Calu3 (cell line): ENCODE measurements at regions of chr1 and their contacts with region 1.

Region 1: DNA sequence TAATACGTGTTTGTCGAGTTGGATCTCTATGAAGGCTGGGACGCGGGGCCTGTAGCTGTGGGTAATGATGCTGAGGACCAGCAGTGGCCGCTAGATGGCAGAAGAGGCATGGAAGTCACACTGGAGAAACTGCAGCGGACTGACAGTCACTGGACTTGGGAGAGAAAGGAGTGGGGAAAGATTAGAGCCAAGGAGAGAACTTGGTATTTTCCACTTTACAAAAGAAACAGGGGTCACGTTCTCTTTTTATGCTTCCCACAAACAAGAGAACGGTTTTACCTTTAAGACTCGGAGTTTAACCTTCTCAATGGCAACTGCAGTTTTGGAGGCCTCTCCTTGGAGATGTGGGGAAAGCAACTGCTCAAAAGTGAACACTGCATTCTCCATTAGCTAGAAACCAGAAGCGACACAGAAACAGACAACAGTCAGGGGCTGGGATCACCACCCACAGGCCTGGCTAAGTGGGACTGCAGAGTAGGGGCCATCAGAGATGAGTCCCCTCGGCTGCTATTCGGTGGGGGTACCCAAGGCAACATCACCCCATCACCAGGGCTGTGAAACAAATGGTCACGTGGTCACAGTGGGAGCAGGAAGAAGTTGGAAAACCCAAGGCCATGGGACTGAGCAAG is 51.1 kb upstream of the EDEM3 start:
- DNase-seq: peak; percentile 90
- H3K4me3 Mint-ChIP-seq: no peak overlapping the region
- H3K27ac Mint-ChIP-seq: no peak overlapping the region
- H3K4me1 Mint-ChIP-seq: peaks cover 9% of the 10 kb centered on the region
- H3K27me3 Mint-ChIP-seq: no peaks in the 10 kb centered on the region
- CTCF ChIP-seq: peak; percentile 88

Region 2: DNA sequence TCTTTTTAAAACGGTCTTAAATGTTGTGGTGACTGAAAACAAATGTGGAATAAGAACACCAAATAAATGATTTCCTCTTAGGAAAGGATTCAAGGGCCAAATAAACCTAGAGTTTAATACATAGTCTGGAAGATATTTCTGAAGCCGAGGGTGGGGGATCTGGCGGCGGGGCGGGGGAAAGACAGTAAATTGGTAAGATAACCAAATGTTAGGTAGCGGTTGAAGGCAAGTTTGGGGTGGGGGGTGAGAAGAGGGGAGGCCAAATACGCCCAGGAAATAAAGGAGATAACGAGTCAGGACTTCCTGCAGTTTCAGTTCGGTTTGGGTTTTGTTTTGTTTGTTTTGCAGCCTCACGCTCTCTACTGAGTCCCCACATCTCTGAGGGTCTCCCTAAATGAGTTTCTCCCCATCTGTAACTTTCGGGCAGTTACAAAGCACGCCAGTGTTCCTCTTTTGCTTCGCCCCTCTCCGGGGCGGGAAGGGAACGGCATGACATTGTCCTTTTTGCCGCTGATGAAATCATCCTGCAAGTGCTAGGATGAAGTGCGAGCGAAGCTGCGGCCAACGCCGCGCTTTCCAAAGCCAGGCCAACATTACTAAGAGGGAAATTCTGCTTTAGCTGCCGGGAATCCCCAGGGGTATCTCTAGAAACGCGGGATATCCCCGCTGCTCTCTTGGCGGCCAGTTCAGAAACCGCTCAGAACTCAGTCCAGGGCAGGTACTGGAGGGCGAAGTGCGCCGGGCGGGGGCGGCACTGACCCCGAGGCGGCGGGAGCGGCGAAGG is 167.7 kb after region 1 on chr1:
- CTCF ChIA-PET with region 1: interaction called, 13 read pairs
- intact Hi-C with region 1: no loop called
- DNase-seq: peak; percentile 53
- H3K4me3 Mint-ChIP-seq: peak overlapping the region; percentile 88
- H3K27ac Mint-ChIP-seq: peak overlapping the region; percentile 96
- H3K4me1 Mint-ChIP-seq: peaks cover 18% of the 10 kb centered on the region
- H3K27me3 Mint-ChIP-seq: no peaks in the 10 kb centered on the region
- CTCF ChIP-seq: no peak

Region 3: DNA sequence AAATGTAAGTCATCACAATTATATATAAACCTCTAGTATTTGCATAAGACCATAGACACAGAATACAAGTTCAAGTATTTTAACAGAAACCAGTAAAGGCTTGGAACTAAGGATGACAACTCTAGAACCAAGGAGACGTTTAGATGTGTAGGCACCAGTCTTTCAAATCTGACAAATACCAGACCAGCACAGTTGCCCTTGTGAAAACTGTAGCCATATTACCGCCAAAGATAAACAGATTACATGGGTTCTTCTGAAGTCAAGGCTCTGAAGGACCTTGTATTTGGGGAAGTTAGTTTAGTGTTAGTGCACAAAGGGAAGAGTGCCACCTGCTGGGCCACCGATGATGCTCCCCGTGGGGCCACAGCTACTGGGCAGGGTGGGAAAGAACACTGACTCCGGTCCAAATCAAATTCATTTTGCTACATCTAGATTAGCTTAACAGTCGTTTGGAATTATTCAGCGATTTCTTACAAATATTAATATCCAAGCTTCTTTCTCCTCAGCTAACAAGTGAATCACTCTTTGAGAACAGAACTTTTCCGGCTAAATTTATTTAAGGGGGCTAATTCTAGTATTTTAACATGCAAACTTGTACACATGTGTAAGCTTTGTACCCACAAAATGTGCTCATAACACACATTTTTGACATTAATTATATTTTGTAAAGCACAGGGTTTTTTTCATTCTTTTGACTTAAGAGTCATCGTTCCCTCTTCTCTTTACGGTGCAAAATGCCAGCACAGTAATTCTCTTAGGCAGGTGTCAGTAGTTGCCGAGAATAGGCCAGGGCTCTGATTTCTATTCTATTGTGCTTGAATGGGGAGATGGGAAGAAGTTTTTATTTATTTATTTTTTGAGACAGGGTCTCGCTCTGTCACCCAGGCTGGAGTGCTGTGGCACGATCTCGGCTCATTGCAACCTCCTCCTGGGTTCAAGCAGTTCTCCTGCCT is 176.5 kb after region 1 on chr1:
- CTCF ChIA-PET with region 1: interaction called, 32 read pairs
- intact Hi-C with region 1: loop called (anchors 1 kb)
- DNase-seq: peak; percentile 83
- H3K4me3 Mint-ChIP-seq: no peak overlapping the region
- H3K27ac Mint-ChIP-seq: no peak overlapping the region
- H3K4me1 Mint-ChIP-seq: no peaks in the 10 kb centered on the region
- H3K27me3 Mint-ChIP-seq: peaks cover 23% of the 10 kb centered on the region
- CTCF ChIP-seq: peak; percentile 85

Region 4: DNA sequence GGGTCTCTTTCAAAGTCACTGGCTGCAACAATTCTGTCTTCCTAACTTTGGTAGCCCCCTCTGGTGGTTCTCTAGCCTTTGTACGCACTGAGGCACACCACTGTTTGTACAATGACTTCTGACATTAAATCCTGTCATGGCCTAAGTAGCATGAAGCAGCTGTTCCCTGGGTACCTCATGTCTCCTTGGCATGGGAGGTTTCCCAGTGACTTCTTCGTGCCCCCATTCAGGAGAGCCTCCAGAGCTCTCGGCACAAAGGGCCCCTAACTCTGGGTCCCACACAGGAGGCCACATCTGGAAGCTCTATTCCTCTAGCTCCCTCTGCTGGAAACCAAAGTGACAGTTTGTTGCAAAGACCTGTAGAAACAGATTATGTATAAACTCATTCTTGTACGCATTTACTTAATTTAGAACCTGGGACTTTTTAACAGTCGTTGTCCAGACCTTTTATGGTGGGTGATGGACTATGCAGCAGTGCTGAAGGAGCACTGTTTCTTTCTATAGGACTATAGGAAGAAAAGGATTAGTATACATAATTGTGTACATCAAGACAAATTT is 364.6 kb after region 1 on chr1:
- CTCF ChIA-PET with region 1: interaction called, 6 read pairs
- intact Hi-C with region 1: loop called (anchors 2 kb)
- DNase-seq: peak; percentile 41
- H3K4me3 Mint-ChIP-seq: no peak overlapping the region
- H3K27ac Mint-ChIP-seq: no peak overlapping the region
- H3K4me1 Mint-ChIP-seq: no peaks in the 10 kb centered on the region
- H3K27me3 Mint-ChIP-seq: no peaks in the 10 kb centered on the region
- CTCF ChIP-seq: peak; percentile 68

Region 5: DNA sequence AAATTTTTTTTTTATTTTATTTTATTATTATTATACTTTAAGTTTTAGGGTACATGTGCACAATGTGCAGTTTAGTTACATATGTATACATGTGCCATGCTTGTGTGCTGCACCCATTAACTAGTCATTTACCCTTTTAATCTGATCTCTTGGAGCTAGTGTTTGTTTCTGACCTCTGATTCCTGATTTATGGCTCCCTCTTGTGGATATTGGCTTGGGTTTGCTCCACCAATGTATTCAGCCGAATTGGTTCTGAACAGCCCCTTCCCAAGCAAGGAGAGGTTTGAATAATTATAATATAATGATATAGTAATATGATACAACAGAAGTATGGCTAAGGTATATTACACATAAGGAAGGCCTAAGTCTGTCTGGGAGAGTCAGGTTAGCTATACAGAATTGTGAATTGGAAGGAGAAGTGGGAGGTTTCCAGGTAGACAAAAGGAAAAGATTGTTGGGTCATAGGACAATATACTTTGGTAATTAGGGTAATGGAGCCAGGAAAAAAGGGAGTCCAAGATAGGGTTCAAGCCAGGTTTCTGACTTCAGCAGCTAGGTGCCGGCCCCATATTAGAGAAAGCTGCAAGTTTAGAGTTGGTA is 875.4 kb after region 1 on chr1:
- CTCF ChIA-PET with region 1: interaction called, 5 read pairs
- intact Hi-C with region 1: loop called (anchors 5 kb)
- DNase-seq: peak; percentile 56
- H3K4me3 Mint-ChIP-seq: no peak overlapping the region
- H3K27ac Mint-ChIP-seq: no peak overlapping the region
- H3K4me1 Mint-ChIP-seq: no peaks in the 10 kb centered on the region
- H3K27me3 Mint-ChIP-seq: no peaks in the 10 kb centered on the region
- CTCF ChIP-seq: peak; percentile 59

Region 6: GRCh38 chr1:185695299-185695698 is 889.5 kb after region 1 on chr1:
- CTCF ChIA-PET with region 1: no interaction called
- intact Hi-C with region 1: loop called (anchors 5 kb)
- DNase-seq: no peak
- H3K4me3 Mint-ChIP-seq: no peak overlapping the region
- H3K27ac Mint-ChIP-seq: no peak overlapping the region
- H3K4me1 Mint-ChIP-seq: peaks cover 9% of the 10 kb centered on the region
- H3K27me3 Mint-ChIP-seq: peaks cover 1% of the 10 kb centered on the region
- CTCF ChIP-seq: peak; percentile 24